Activated CD4-positive, alpha-beta memory T cell treated with anti-CD3 and anti-CD28 coated beads for 36 hours (primary cell): ENCODE measurements at regions of chr6 and their contacts with region 1.

Region 1: GRCh38 chr6:70369332-70369950 is 43.9 kb upstream of the FAM135A start:
- DNase-seq: peak; percentile 77
- H3K4me3 Mint-ChIP-seq: no peak overlapping the region
- H3K27ac Mint-ChIP-seq: no peak overlapping the region
- H3K4me1 Mint-ChIP-seq: no peaks in the 10 kb centered on the region
- H3K27me3 Mint-ChIP-seq: peaks cover 6% of the 10 kb centered on the region

Region 2: DNA sequence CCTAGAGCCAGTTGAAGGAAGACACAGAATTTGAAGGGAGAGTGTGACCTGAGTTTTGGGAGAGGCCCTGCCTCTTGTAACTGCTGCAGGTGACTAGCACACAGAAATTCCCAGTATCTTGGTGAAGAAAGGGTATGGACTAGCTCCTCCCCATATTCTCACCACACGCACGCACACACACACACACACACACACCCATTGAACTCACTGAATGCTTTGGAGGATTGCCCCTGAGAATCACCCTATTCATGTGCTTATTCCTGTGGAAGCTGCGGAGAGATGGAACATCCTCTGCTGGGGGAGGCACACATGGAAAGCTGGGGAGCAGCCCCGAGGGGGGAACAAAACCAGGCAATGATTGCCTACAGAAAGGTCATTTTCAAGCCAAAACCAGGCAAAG is 566.4 kb before region 1 on chr6:
- CTCF ChIA-PET with region 1: no interaction called
- POLR2A ChIA-PET with region 1: no interaction called
- intact Hi-C with region 1: no loop called
- DNase-seq: no peak
- H3K4me3 Mint-ChIP-seq: no peak overlapping the region
- H3K27ac Mint-ChIP-seq: no peak overlapping the region
- H3K4me1 Mint-ChIP-seq: no peaks in the 10 kb centered on the region
- H3K27me3 Mint-ChIP-seq: no peaks in the 10 kb centered on the region

Region 3: GRCh38 chr6:70310063-70310694 is 59.3 kb before region 1 on chr6:
- CTCF ChIA-PET with region 1: interaction called, 175 read pairs
- POLR2A ChIA-PET with region 1: no interaction called
- intact Hi-C with region 1: loop called (anchors 1 kb)
- DNase-seq: no peak
- H3K4me3 Mint-ChIP-seq: no peak overlapping the region
- H3K27ac Mint-ChIP-seq: no peak overlapping the region
- H3K4me1 Mint-ChIP-seq: peaks cover 2% of the 10 kb centered on the region
- H3K27me3 Mint-ChIP-seq: peaks cover 15% of the 10 kb centered on the region

Region 4: GRCh38 chr6:70390067-70390466 is 20.6 kb after region 1 on chr6:
- CTCF ChIA-PET with region 1: interaction called, 19 read pairs
- POLR2A ChIA-PET with region 1: no interaction called
- intact Hi-C with region 1: no loop called
- DNase-seq: no peak
- H3K4me3 Mint-ChIP-seq: no peak overlapping the region
- H3K27ac Mint-ChIP-seq: no peak overlapping the region
- H3K4me1 Mint-ChIP-seq: no peaks in the 10 kb centered on the region
- H3K27me3 Mint-ChIP-seq: peaks cover 15% of the 10 kb centered on the region

Region 5: GRCh38 chr6:70667711-70668498 is 298.5 kb after region 1 on chr6 and contains the start of gene SMAP1:
- CTCF ChIA-PET with region 1: interaction called, 11 read pairs
- POLR2A ChIA-PET with region 1: no interaction called
- intact Hi-C with region 1: no loop called
- DNase-seq: peak; percentile 96
- H3K4me3 Mint-ChIP-seq: peak within 1 kb of the TSS; percentile 90
- H3K27ac Mint-ChIP-seq: peak within 1 kb of the TSS; percentile 88
- H3K4me1 Mint-ChIP-seq: peaks cover 54% of the 10 kb centered on the region
- H3K27me3 Mint-ChIP-seq: no peaks in the 10 kb centered on the region
- total RNA-seq, gene SMAP1: 23.6 to 24.2 TPM

Region 6: DNA sequence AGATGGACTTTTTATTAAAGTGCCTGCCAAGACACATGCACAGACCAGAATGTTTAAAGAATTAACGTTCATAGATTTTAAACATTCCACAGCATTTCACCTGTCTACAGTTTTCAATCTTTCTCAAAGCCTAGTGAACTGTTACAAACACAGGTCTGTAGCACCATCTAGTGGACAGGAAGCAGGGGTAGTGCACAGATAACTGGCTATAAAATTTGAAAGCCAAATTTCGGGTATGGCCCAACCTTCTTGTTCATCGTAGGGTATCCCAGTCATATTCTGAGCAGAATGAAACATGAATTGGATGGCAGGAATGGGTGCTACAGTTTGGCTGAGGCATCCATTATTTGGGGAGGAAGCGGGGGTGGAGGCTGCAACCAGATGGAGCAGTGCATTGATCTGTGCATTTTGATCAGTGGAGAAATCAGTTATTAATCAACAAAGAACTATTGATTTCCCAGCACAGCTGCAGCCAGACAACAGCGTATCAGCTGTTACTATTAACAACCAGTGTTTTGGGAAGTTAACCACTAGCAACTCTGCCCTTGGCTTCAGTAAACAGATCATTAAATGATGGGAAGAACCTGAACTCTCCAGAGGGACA is 643.5 kb after region 1 on chr6:
- CTCF ChIA-PET with region 1: interaction called, 6 read pairs
- POLR2A ChIA-PET with region 1: no interaction called
- intact Hi-C with region 1: loop called (anchors 2 kb)
- DNase-seq: no peak
- H3K4me3 Mint-ChIP-seq: no peak overlapping the region
- H3K27ac Mint-ChIP-seq: no peak overlapping the region
- H3K4me1 Mint-ChIP-seq: no peaks in the 10 kb centered on the region
- H3K27me3 Mint-ChIP-seq: peaks cover 18% of the 10 kb centered on the region